GM12878 (cell line): ENCODE measurements at regions of chr1 and their contacts with region 1.

Region 1: GRCh38 chr1:248873409-248873992 is 14.6 kb upstream of the ZNF692 start:
- DNase-seq: peak; percentile 98
- ATAC-seq: peak; percentile 87
- H3K4me3 ChIP-seq: peak overlapping the region; percentile 65
- H3K27ac ChIP-seq: peak overlapping the region; percentile 85
- H3K4me1 ChIP-seq: peaks cover 4% of the 10 kb centered on the region; the same call in 1 of the 2 replicates
- H3K27me3 ChIP-seq: no peaks in the 10 kb centered on the region
- CTCF ChIP-seq: no peak
- EP300 ChIP-seq: peak in 1 of 2 experiments; percentile 77; a peak in 1 of 4 replicates
- POLR2A ChIP-seq: peak; percentile 85
- RAD21 ChIP-seq: no peak

Region 2: GRCh38 chr1:248786156-248786555 is 87.3 kb before region 1 on chr1:
- CTCF ChIA-PET with region 1: no interaction called
- POLR2A ChIA-PET with region 1: no interaction called
- RAD21 ChIA-PET with region 1: no interaction called
- SMC1A ChIA-PET with region 1: no interaction called
- in situ Hi-C with region 1: no loop called
- intact Hi-C with region 1: no loop called
- DNase-seq: no peak
- ATAC-seq: peak; percentile 95
- H3K4me3 ChIP-seq: no peak overlapping the region
- H3K27ac ChIP-seq: no peak overlapping the region
- H3K4me1 ChIP-seq: no peaks in the 10 kb centered on the region
- H3K27me3 ChIP-seq: no peaks in the 10 kb centered on the region
- CTCF ChIP-seq: no peak
- EP300 ChIP-seq: no peak
- POLR2A ChIP-seq: no peak
- RAD21 ChIP-seq: no peak

Region 3: DNA sequence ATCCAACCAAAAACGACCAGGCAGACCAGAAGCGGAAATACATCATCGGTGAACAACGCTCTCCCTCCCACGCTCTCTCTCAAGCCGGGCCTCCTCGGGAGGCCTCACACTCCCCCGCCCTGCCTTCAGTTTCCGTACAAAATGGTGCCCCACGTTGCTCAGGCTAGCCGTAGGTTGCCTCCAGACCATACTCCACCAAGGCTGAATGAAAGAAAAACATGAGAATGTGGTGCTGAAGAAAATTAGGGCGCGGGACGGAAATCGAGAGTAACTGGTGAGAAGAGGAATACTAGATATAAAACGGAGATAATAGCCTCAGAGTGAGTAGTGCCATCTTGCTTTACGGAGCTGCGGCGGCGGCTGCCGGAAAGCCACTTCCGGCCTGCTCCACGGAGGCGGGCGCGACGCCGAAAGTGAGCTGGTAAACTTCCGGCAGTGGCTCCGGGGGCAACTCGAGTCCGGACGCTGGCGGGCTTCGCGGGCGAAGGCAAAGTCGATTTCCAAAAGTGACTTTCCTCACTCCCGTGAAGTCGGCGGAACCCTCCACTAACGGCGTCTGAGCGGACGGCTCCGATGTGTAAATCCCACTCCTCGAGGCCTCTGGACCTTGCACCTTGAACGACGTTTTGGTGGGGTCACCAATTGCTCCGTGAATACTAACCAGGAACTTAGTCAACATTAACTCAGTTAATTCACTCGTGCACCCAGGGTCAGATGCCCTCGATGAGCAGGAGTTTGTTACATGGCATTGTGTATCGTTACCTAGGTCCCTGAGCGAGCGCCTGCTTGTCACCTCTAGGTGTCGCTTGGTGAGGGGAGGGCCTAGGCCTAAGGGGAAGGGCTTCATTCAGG is 47.4 kb before region 1 on chr1 and contains the start of gene SH3BP5L:
- CTCF ChIA-PET with region 1: interaction called, 12 read pairs
- POLR2A ChIA-PET with region 1: interaction called, 11 read pairs
- RAD21 ChIA-PET with region 1: interaction called, 12 read pairs
- SMC1A ChIA-PET with region 1: interaction called, 8 read pairs
- in situ Hi-C with region 1: no loop called
- intact Hi-C with region 1: loop called (anchors 1 kb)
- DNase-seq: peak; percentile 85
- ATAC-seq: peak; percentile 91
- H3K4me3 ChIP-seq: peak within 1 kb of the TSS; percentile 79
- H3K27ac ChIP-seq: peak within 1 kb of the TSS; percentile 98
- H3K4me1 ChIP-seq: peaks cover 13% of the 10 kb centered on the region
- H3K27me3 ChIP-seq: no peaks in the 10 kb centered on the region
- CTCF ChIP-seq: peak; percentile 83 to 89 (median 84); a peak in 5 of 6 replicates
- EP300 ChIP-seq: no peak
- POLR2A ChIP-seq: peak; percentile 82
- RAD21 ChIP-seq: peak; percentile 51; the same call in 1 of the 2 replicates
- polyA plus RNA-seq, gene SH3BP5L: 1.1 to 1.6 TPM

Region 4: DNA sequence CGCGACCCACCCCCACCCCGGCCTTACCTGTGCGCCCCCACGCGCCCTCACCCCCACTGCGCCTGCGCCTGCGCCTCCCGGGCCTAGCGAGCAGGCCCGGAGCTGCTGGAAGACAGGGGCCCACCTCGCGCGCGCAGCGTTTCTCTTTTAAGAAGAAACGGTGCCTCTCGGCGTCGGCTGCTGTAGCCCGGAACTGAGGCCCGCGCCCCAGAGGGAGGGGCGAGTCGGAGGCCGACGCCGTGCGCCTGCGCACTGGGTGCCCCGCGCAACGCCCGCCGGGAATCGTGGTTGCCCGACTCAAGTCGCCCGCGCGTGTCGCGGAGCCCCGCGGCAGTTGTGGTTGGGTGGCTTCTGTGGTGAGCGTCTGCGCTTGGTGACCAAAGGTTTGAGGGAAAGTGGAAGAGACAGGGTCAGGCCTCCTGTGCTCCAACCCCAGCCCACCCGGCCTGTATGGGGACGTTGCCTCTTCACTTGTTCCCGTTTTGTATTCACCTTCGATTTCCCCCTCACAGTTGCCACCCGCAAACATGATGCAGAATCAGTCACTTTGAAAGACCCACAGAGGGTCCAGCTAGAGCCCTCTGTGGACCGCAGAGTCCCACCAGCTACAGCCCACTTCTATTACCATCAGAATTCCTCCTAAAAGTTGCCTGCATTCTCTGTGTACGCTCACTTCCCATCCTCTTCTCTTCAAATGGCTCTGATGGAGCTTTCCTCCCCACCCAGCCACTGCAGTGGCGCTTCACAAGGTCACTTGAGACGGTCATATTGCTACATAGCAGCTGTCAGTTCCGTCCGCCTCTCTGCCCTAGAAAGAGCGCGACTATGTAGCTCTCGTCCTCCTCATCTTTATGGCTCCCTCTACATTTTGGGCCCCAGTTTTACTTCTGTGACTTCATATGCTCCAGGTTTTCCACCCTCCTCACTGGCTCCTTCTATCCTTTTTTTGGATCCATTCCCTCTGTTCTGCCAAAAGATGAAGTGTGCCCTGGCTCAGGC is 14.3 kb before region 1 on chr1 and contains the start of gene ZNF692:
- CTCF ChIA-PET with region 1: interaction called, 27 read pairs
- POLR2A ChIA-PET with region 1: interaction called, 22 read pairs
- RAD21 ChIA-PET with region 1: interaction called, 11 read pairs
- SMC1A ChIA-PET with region 1: interaction called, 24 read pairs
- in situ Hi-C with region 1: no loop called
- intact Hi-C with region 1: loop called (anchors 1 kb)
- DNase-seq: peak; percentile 85
- ATAC-seq: peak; percentile 86
- H3K4me3 ChIP-seq: peak within 1 kb of the TSS; percentile 95
- H3K27ac ChIP-seq: peak within 1 kb of the TSS; percentile 82
- H3K4me1 ChIP-seq: peaks cover 11% of the 10 kb centered on the region
- H3K27me3 ChIP-seq: no peaks in the 10 kb centered on the region
- CTCF ChIP-seq: no peak
- EP300 ChIP-seq: no peak
- POLR2A ChIP-seq: peak; percentile 91
- RAD21 ChIP-seq: no peak
- polyA plus RNA-seq, gene ZNF692: 5.3 to 18.5 TPM

Region 5: DNA sequence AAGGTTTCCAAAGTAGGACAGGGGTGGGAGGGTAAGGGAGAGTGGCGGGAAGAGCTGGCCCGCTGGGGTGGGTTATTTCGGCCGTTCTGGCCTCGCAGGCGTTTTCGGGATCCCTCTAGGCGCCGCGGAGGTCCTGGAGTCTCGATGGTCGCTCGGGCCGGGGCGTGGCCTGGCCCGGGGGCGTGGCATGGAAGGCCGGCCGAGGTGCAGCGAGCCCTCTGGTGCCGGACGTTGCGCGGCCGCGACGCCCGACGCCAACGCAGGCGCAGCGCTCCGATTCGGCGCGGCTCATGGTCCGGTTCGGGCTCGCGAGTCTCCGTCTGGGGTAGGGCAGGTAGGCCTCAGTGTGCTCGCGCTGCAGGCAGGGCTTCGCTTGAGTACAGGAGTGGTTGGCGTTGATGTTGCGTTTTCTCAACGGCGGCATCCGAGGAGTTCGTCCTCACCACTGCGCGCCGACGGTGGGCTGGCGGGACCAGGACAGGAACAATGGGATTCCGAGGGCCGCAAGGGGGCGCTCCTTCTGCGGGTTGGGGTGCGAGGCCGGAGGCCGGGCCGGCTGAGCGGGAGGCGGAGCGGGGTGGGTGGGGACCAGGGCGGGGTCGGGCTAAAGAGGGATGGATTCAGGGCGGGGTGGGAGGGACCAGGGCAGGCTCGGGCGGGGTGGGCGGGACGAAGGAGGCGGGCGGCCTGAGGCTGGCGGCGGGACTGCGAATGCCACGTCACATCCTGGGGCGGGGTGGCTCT is 32.7 kb after region 1 on chr1 and contains the start of gene PGBD2:
- CTCF ChIA-PET with region 1: interaction called, 5 read pairs
- POLR2A ChIA-PET with region 1: no interaction called
- RAD21 ChIA-PET with region 1: interaction called, 9 read pairs
- SMC1A ChIA-PET with region 1: interaction called, 3 read pairs
- in situ Hi-C with region 1: no loop called
- intact Hi-C with region 1: loop called (anchors 1 kb)
- DNase-seq: peak; percentile 66
- ATAC-seq: peak; percentile 94
- H3K4me3 ChIP-seq: peak within 1 kb of the TSS; percentile 92
- H3K27ac ChIP-seq: peak within 1 kb of the TSS; percentile 82
- H3K4me1 ChIP-seq: peaks cover 2% of the 10 kb centered on the region; the same call in 1 of the 2 replicates
- H3K27me3 ChIP-seq: no peaks in the 10 kb centered on the region
- CTCF ChIP-seq: peak; percentile 57 to 80 (median 75)
- EP300 ChIP-seq: no peak
- POLR2A ChIP-seq: peak; percentile 98
- RAD21 ChIP-seq: peak; percentile 63
- polyA plus RNA-seq, gene PGBD2: 4.7 to 5.6 TPM